A549 (cell line): ENCODE measurements at regions of chr9 and their contacts with region 1.

Region 1: DNA sequence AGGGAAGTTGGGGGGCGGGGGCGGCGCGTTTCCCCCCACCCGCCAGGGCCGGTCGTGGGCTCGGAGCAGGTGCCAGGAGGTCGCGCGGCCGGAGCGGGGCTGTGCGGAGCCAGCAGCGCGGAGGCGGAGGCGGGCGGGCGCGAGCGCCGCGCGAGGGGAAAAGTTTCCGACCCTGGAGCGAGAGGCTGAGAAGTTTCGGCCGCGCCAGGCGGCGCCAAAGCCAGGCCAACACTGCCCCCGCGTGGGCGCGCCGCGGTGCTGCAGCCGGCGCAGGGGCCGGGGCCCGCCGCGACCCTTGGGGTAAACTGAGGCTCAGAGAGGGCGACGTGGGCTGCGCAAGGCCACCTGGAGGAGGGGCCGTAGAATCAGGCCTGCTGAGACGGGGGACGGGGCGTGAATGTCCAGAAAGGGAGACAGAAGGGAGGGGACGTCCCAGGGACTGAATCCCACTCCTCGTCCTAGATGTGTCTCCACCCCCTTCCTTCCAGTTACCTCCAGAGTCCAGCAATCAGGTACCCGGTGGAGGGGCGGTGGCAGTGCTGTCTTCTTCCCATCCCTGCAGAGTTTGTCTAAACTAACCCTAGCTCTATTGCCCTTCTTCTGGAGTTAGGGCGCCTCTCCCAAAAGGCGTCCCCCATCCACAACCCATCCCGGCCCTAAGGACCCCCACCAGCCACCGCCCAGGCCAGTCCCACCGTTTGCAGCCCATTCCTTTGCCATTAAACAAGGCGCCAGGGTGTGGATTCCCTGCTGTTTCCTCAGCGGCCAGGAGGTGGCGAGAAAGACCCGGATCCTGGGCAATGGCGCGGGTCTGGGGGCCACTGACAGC is 10.2 kb downstream of the C9orf50 start:
- DNase-seq: peak; percentile 74 to 88
- ATAC-seq: peak; percentile 57 to 62
- H3K4me3 ChIP-seq: peak overlapping the region; percentile 55
- H3K27ac ChIP-seq: peak overlapping the region; percentile 100
- H3K4me1 ChIP-seq: peaks cover 62% of the 10 kb centered on the region
- CTCF ChIP-seq: peak; percentile 91
- EP300 ChIP-seq: no peak
- POLR2A ChIP-seq: peak; percentile 19
- RAD21 ChIP-seq: peak; percentile 87 to 99

Region 2: DNA sequence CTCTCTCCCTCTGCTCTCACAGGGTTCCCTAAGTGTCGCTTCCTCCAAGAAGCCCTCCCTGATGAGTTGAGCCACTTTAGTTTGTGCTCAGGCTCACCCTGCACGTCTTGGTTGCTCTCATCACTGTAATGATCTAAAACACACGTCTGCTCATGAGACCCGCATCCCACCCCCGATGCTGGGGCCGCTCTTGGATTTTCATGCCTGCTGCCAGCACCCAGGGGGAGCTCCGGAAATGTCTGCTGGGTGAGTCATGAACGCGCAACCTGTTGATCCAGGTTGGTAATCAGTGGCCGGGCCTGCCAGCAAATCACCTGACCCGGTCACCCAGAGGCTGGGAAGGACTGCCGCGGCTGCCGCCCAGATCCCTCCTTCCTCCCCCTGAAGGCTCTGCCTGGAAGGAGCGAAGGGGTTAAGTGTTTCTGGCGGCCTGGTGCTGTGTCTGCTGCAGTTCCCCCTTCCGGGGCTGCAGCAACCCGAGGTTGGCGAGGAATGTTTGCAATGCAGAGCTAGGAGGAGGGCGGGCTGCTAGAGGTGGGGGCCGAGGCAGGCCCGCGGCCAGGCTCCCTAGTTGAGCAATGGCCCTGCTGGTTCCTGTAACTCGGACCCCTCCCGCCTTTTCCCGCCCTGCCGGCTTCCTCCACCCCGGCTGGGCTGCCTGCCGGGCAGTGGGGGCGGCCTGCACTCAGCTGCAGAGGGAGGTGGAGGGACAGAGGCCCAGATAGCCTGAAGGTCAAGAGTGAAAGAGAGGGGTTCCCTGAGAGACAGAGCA is 276.5 kb before region 1 on chr9:
- CTCF ChIA-PET with region 1: interaction called, 3 read pairs
- POLR2A ChIA-PET with region 1: interaction called, 12 read pairs
- DNase-seq: peak; percentile 95 to 99
- ATAC-seq: peak; percentile 93 to 94
- H3K4me3 ChIP-seq: peak overlapping the region; percentile 7; the same call in 1 of the 3 replicates
- H3K27ac ChIP-seq: peak overlapping the region; percentile 99 to 100
- H3K4me1 ChIP-seq: peaks cover 58% of the 10 kb centered on the region
- CTCF ChIP-seq: peak; percentile 13; the same call in 1 of the 3 replicates
- EP300 ChIP-seq: peak; percentile 95 to 98
- POLR2A ChIP-seq: peak; percentile 4; the same call in 1 of the 2 replicates
- RAD21 ChIP-seq: peak; percentile 25 to 78; a peak in 4 of 5 replicates

Region 3: DNA sequence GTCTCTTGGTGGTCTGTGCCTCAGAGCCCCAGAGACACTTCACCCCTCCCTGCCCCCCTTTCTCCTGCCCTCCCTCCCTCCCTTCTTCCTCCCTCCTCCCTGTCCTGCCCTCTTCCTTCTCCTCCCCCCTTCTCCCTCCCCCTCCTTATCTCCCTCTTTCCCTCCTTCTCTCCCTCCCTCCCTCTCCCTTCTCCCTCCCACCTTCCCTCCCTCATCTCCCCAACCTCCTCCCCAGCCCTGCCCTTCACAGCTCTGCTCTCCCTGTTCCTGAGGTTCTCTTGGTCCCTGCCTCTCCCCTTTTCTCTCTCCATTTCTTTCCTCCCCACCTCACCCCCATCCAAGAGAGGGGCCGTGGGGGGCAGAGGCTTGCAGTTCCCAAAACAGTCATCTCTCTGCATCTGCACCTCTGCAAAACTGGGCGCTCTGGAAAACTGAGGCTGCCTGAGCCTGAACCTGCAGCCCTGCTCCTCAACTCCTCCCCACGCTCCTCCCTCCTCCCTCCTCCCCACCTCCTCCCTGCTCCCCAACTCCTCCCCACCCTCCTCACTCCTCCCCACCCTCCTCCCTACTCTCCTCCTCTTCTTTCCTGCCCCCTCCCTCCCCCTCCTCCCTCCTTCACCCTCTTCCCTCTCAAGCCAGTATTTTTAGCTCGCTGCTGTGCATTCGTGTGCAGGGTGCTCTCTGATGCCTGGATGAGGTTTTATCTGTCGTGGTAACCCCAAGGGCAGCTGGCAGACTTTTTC is 208.9 kb before region 1 on chr9:
- CTCF ChIA-PET with region 1: no interaction called
- POLR2A ChIA-PET with region 1: no interaction called
- DNase-seq: peak in 1 of 2 experiments; percentile 52
- ATAC-seq: peak in 1 of 2 experiments; percentile 3; a peak in 1 of 6 replicates
- H3K4me3 ChIP-seq: no peak overlapping the region
- H3K27ac ChIP-seq: peak overlapping the region; percentile 71 to 84
- H3K4me1 ChIP-seq: peaks cover 52% of the 10 kb centered on the region
- CTCF ChIP-seq: no peak
- EP300 ChIP-seq: no peak
- POLR2A ChIP-seq: no peak
- RAD21 ChIP-seq: no peak

Region 4: GRCh38 chr9:129489838-129490582 is 120.7 kb before region 1 on chr9:
- CTCF ChIA-PET with region 1: interaction called, 13 read pairs
- POLR2A ChIA-PET with region 1: interaction called, 22 read pairs
- DNase-seq: peak in 1 of 2 experiments; percentile 68
- ATAC-seq: peak; percentile 0; a peak in 3 of 6 replicates
- H3K4me3 ChIP-seq: peak overlapping the region; percentile 41
- H3K27ac ChIP-seq: peak overlapping the region; percentile 99 to 100
- H3K4me1 ChIP-seq: peaks cover 95% of the 10 kb centered on the region
- CTCF ChIP-seq: no peak
- EP300 ChIP-seq: no peak
- POLR2A ChIP-seq: peak; percentile 53
- RAD21 ChIP-seq: no peak

Region 5: GRCh38 chr9:129569502-129570449 is 40.9 kb before region 1 on chr9:
- CTCF ChIA-PET with region 1: interaction called, 29 read pairs
- POLR2A ChIA-PET with region 1: interaction called, 12 read pairs
- DNase-seq: peak; percentile 70 to 90
- ATAC-seq: peak; percentile 38 to 48
- H3K4me3 ChIP-seq: no peak overlapping the region
- H3K27ac ChIP-seq: peak overlapping the region; percentile 99 to 100
- H3K4me1 ChIP-seq: peaks cover 48% of the 10 kb centered on the region
- CTCF ChIP-seq: peak; percentile 42
- EP300 ChIP-seq: no peak
- POLR2A ChIP-seq: peak; percentile 17; the same call in 1 of the 2 replicates
- RAD21 ChIP-seq: peak; percentile 27 to 44; a peak in 2 of 5 replicates

Region 6: GRCh38 chr9:129597355-129598088 is 13.2 kb before region 1 on chr9:
- CTCF ChIA-PET with region 1: interaction called, 10 read pairs
- POLR2A ChIA-PET with region 1: interaction called, 10 read pairs
- DNase-seq: peak; percentile 61 to 78
- ATAC-seq: peak; percentile 73 to 75
- H3K4me3 ChIP-seq: peak overlapping the region; percentile 40
- H3K27ac ChIP-seq: peak overlapping the region; percentile 99 to 100
- H3K4me1 ChIP-seq: peaks cover 57% of the 10 kb centered on the region
- CTCF ChIP-seq: no peak
- EP300 ChIP-seq: peak; percentile 75 to 88; a peak in 3 of 5 replicates
- POLR2A ChIP-seq: peak; percentile 28
- RAD21 ChIP-seq: peak in 1 of 2 experiments; percentile 30; a peak in 1 of 5 replicates

Region 7: GRCh38 chr9:129968690-129969501 is 358.2 kb after region 1 on chr9:
- CTCF ChIA-PET with region 1: no interaction called
- POLR2A ChIA-PET with region 1: no interaction called
- DNase-seq: peak in 1 of 2 experiments; percentile 47
- ATAC-seq: peak; percentile 34 to 67; a peak in 3 of 6 replicates
- H3K4me3 ChIP-seq: no peak overlapping the region
- H3K27ac ChIP-seq: no peak overlapping the region
- H3K4me1 ChIP-seq: peaks cover 43% of the 10 kb centered on the region
- CTCF ChIP-seq: no peak
- EP300 ChIP-seq: no peak
- POLR2A ChIP-seq: no peak
- RAD21 ChIP-seq: no peak